Activated CD4-positive, alpha-beta T cell treated with anti-CD3 and anti-CD28 coated beads for 36 hours (primary cell): ENCODE measurements at regions of chr19 and their contacts with region 1.

Region 1: GRCh38 chr19:37466798-37467607 is at the start of gene ZNF569:
- DNase-seq: peak; percentile 93
- ATAC-seq: peak; percentile 71
- H3K4me3 Mint-ChIP-seq: peak within 1 kb of the TSS; percentile 94
- H3K27ac Mint-ChIP-seq: peak within 1 kb of the TSS; percentile 95
- H3K4me1 Mint-ChIP-seq: peaks cover 31% of the 10 kb centered on the region
- H3K27me3 Mint-ChIP-seq: no peaks in the 10 kb centered on the region
- total RNA-seq, gene ZNF569: 7.4 to 9.1 TPM

Region 2: GRCh38 chr19:36687214-36688056 is 779.6 kb before region 1 on chr19 and contains the start of gene ZNF567:
- CTCF ChIA-PET with region 1: no interaction called
- POLR2A ChIA-PET with region 1: no interaction called
- intact Hi-C with region 1: loop called in 1 of 2 experiments (anchors 2 kb)
- DNase-seq: peak; percentile 99
- ATAC-seq: peak; percentile 93
- H3K4me3 Mint-ChIP-seq: peak within 1 kb of the TSS; percentile 99
- H3K27ac Mint-ChIP-seq: peak within 1 kb of the TSS; percentile 96
- H3K4me1 Mint-ChIP-seq: peaks cover 27% of the 10 kb centered on the region
- H3K27me3 Mint-ChIP-seq: no peaks in the 10 kb centered on the region
- total RNA-seq, gene ZNF567: 7.4 to 8.6 TPM

Region 3: GRCh38 chr19:36973021-36973843 is 493.8 kb before region 1 on chr19:
- CTCF ChIA-PET with region 1: no interaction called
- POLR2A ChIA-PET with region 1: no interaction called
- intact Hi-C with region 1: loop called (anchors 2 to 5 kb)
- DNase-seq: peak; percentile 92
- ATAC-seq: peak; percentile 98
- H3K4me3 Mint-ChIP-seq: peak overlapping the region; percentile 81
- H3K27ac Mint-ChIP-seq: peak overlapping the region; percentile 92
- H3K4me1 Mint-ChIP-seq: peaks cover 6% of the 10 kb centered on the region
- H3K27me3 Mint-ChIP-seq: no peaks in the 10 kb centered on the region

Region 4: GRCh38 chr19:37506387-37507166 is 39.6 kb after region 1 on chr19 and contains the start of gene ZNF793:
- CTCF ChIA-PET with region 1: no interaction called
- POLR2A ChIA-PET with region 1: interaction called, 3 read pairs
- intact Hi-C with region 1: loop called (anchors 1 kb)
- DNase-seq: peak; percentile 87
- ATAC-seq: peak; percentile 87
- H3K4me3 Mint-ChIP-seq: no peak within 1 kb of the TSS
- H3K27ac Mint-ChIP-seq: no peak within 1 kb of the TSS
- H3K4me1 Mint-ChIP-seq: no peaks in the 10 kb centered on the region
- H3K27me3 Mint-ChIP-seq: no peaks in the 10 kb centered on the region
- total RNA-seq, gene ZNF793: 4.4 to 4.7 TPM

Region 5: DNA sequence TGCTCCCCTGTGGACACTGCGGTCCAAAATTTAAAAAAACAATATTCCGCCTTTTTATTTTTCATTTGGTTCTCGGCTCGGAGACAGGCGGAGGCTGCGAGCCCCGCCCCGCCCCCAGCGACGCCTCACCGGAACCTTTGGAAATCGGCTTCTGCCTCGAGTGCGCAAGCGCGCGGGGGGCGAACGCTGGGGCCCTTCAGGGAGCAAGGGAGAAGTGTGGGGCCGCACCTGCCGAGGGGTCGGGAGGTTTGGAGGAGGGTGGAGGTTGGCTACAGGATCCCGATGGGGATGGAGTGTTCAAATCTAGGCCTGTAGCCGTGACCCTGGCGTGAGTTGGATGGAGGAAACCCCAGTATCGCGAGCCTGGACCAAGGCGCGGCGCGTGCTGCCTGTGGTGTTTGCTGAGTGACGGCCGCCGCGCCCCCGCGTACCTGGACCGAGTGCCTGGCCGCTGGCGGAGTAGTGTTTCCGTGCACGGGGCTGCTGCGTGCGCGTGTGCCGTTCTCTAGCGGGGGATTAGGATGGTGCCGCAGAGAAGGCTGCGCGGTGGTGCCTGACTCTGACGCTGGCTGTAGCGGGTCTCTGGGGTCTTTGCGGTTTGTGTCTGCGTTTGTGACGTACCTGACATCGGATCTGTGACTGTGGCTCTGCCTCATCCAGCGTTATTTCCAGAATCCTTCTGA is 188.8 kb after region 1 on chr19:
- CTCF ChIA-PET with region 1: no interaction called
- POLR2A ChIA-PET with region 1: no interaction called
- intact Hi-C with region 1: loop called in 1 of 2 experiments (anchors 1 kb)
- DNase-seq: peak; percentile 93
- ATAC-seq: peak; percentile 79
- H3K4me3 Mint-ChIP-seq: peak overlapping the region; percentile 94
- H3K27ac Mint-ChIP-seq: peak overlapping the region; percentile 99
- H3K4me1 Mint-ChIP-seq: peaks cover 33% of the 10 kb centered on the region
- H3K27me3 Mint-ChIP-seq: no peaks in the 10 kb centered on the region

Region 6: DNA sequence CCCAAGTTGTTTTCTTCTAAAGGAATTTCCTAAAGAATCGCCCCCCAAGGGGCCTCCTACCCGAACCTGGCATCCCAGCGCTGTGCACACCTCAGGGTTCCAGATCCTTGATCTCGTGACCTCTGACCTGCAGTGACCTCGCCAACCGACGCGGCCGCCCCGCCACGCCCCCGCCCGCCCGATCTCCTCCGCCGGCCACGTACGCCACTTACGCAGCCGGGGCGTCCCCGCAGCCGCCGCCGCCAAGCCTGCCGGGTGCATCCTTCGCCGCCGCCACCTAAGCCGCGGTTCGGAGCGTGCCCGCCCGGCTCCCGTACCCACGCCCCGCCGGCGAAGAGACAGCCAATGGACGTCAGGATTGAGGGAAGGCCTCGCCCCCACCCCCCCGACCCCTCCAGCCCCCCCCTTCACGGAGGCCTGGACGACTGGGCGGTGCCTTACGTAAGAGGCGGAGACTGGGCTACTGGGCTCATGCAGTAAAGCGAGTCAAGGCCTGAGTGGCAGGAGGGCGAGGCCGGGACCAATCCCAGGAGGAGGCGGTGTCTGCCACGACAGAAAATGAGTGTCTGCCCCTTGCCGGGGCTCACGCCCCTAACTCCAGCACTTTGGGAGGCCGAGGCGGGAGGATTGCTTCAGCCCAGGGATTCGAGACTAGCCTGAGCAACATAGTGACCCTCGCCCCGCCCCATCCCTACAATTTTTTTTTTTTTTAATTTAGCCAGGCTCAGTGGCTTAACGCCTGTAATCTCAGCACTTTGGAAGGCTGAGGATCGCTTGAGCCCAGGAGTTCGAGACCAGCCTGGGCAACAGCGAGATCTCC is 848.9 kb after region 1 on chr19 and contains the start of gene YIF1B:
- CTCF ChIA-PET with region 1: no interaction called
- POLR2A ChIA-PET with region 1: no interaction called
- intact Hi-C with region 1: loop called in 1 of 2 experiments (anchors 5 kb)
- DNase-seq: peak; percentile 97
- ATAC-seq: peak; percentile 95
- H3K4me3 Mint-ChIP-seq: peak within 1 kb of the TSS; percentile 94
- H3K27ac Mint-ChIP-seq: peak within 1 kb of the TSS; percentile 98
- H3K4me1 Mint-ChIP-seq: peaks cover 35% of the 10 kb centered on the region
- H3K27me3 Mint-ChIP-seq: no peaks in the 10 kb centered on the region
- total RNA-seq, gene YIF1B: 76.3 to 90.1 TPM